Dorsolateral prefrontal cortex (tissue), 120 donors: ENCODE measurements at regions of chr2 and their contacts with region 1.

Region 1: GRCh38 chr2:158024288-158024898 is 77.3 kb upstream of the UPP2 start:
- DNase-seq: peak in 9 of 10 donors; percentile 35 to 71 (median 51)
- H3K4me3 ChIP-seq: no peak overlapping the region
- H3K27ac ChIP-seq: no peak overlapping the region
- H3K27me3 ChIP-seq: no peaks in the 10 kb centered on the region
- CTCF ChIP-seq: peak; percentile 75 to 95 (median 85)

Region 2: DNA sequence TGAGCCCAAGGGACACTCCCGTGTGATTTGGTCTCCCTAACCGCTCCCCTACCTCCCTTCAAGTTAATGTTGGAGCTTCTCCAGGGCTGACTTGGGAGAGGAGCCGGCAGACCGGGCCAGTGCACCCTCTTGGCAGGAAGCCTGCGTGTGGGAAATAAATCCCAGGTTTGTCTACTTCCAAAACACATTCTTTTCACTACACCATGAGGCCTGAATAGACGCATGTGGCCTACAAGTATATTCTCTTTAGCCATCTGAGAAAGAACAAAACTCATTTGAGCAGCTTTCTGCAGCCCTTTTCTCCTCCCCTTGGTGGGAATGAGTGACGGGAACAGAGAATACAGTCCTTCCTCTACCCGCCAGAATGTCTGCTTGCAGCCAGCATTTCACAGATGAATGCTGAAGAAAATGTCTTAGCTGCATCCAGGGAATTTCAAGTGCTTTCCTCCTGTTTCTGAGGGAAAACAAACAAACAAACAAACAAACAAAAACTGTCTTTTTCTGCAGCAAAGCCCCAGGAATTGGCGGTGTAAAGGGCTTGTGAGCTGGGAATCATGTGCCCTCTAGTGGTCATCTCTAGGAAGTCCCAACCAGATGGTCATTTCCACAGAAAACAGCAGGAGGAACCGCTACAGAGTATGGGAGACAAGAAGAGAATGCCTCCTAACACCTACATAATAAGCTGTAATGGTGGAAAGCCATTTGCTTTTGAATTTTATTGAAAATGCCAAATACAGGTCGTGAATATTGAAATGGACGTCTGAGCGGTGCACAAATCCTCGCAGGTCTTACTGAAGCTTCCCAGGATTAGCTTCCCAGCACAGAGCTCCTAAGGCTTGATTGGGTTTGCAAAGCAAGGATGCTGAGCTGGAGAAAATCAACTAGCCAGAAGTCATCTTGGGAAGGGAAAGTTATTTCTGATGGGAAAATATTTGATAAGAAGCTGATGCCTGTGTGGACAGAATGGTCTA is 729.5 kb after region 1 on chr2:
- intact Hi-C with region 1: loop called in 1 of 2 experiments (anchors 2 kb)
- DNase-seq: peak in 3 of 10 donors; percentile 25 to 62 (median 60)
- H3K4me3 ChIP-seq: peak overlapping the region in 55 of 59 donors; percentile 11 to 64 (median 40)
- H3K27ac ChIP-seq: peak overlapping the region in 29 of 59 donors; percentile 2 to 83 (median 37)
- H3K27me3 ChIP-seq: no peaks in the 10 kb centered on the region
- CTCF ChIP-seq: peak; percentile 87 to 98 (median 94)

Region 3: DNA sequence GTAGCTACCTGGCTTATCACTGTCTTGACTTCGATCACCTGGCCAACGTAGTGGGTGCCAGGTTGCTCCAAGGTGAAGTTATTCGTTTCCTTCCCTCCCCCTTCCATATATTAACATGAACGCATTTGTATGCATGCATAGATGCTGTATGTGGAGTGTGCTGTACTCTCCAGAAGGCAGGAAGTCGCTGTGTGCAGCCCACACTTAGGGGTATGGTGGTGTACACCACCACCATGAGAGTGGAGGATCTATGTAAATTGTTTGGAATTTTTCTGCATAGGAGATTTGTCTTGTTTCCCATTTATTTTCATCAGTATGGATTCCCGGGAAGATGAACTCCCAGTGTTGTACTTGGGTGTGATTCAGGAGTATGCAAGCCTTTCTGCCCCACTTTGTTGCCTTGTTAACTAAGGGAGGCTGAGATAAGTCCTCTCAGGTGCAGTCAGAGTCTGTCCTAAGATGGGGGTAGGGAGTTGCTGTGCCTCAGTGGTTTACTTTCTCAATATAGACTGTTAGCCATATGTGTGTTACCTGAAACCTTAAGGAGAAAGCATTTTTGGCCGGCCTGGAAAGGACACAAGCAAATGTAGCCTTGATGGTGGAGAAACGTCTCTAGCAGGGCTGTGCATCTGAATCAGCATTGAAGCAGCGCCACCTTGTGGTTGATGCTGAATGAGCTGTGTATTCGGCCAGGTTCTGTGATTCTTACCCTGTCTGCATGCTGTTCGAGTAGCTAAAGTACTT is 1093.9 kb after region 1 on chr2:
- intact Hi-C with region 1: loop called in 1 of 2 experiments (anchors 10 kb)
- DNase-seq: peak; percentile 80 to 96 (median 88)
- H3K4me3 ChIP-seq: no peak overlapping the region
- H3K27ac ChIP-seq: peak overlapping the region in 6 of 59 donors; percentile 16 to 57 (median 41)
- H3K27me3 ChIP-seq: no peaks in the 10 kb centered on the region
- CTCF ChIP-seq: peak; percentile 92 to 100 (median 97)